CD4-positive, alpha-beta T cell (primary cell): ENCODE measurements at regions of chr12 and their contacts with region 1.

Region 1: DNA sequence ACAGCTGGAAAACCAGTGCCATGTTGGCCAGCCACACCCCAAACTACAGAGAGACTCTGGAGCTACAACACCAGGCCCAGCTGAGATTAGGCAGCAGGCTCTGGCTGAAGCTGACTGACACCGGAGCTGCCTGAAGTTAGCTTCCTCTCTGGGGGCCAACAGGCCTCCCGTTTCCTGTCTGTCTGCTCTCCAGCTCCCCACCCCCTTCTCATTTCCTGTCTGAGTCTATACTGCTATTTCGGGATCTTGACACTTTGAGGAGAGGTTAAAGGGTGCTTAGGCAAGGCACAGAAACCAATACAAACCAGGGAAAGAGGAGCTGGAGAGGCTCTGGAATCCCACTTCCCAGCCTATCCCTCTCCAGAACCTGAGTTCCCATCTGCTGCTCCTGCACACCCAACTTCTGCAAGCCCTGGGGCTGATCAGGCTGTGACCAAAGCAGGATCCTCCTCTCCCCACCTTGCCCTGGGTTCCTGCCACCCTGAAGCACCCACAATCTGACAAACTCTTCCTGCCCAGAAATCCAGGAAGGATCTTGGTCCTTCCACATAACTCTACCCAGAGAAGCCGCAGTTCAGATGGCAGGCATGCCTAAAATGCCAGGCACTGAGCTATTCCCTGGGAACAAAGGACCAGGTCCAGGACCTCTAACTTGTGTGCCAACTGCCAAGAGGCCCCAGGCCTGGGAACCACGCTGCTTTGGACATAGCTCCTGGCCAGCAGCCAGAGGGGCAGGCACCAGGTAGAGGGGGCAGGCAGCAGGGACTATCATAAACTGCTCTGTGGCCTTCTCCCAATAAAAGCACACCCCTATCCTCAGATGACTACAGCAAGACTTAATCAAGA is 39.9 kb downstream of the PRPF40B start:
- DNase-seq: peak; percentile 53 to 91 (median 74)
- ATAC-seq: peak; percentile 97
- H3K4me3 ChIP-seq: peak overlapping the region; percentile 10
- H3K4me3 Mint-ChIP-seq: peak overlapping the region; percentile 90
- H3K27ac ChIP-seq: peak overlapping the region; percentile 88 to 97
- H3K27ac Mint-ChIP-seq: peak overlapping the region; percentile 97
- H3K4me1 ChIP-seq: peaks cover 65% of the 10 kb centered on the region
- H3K4me1 Mint-ChIP-seq: peaks cover 83% of the 10 kb centered on the region
- H3K27me3 ChIP-seq: no peaks in the 10 kb centered on the region
- H3K27me3 Mint-ChIP-seq: no peaks in the 10 kb centered on the region
- CTCF ChIP-seq: no peak

Region 2: GRCh38 chr12:49673446-49674317 is 10.5 kb after region 1 on chr12:
- CTCF ChIA-PET with region 1: interaction called, 11 read pairs
- POLR2A ChIA-PET with region 1: interaction called, 105 read pairs
- intact Hi-C with region 1: loop called in 1 of 2 experiments (anchors 1 kb)
- DNase-seq: peak in 6 of 14 experiments; percentile 21 to 55 (median 32)
- ATAC-seq: peak; percentile 7
- H3K4me3 ChIP-seq: no peak overlapping the region
- H3K4me3 Mint-ChIP-seq: peak overlapping the region; percentile 72
- H3K27ac ChIP-seq: peak overlapping the region; percentile 89 to 93
- H3K27ac Mint-ChIP-seq: peak overlapping the region; percentile 97
- H3K4me1 ChIP-seq: peaks cover 71% of the 10 kb centered on the region
- H3K4me1 Mint-ChIP-seq: peaks cover 91% of the 10 kb centered on the region
- H3K27me3 ChIP-seq: no peaks in the 10 kb centered on the region
- H3K27me3 Mint-ChIP-seq: no peaks in the 10 kb centered on the region
- CTCF ChIP-seq: no peak

Region 3: DNA sequence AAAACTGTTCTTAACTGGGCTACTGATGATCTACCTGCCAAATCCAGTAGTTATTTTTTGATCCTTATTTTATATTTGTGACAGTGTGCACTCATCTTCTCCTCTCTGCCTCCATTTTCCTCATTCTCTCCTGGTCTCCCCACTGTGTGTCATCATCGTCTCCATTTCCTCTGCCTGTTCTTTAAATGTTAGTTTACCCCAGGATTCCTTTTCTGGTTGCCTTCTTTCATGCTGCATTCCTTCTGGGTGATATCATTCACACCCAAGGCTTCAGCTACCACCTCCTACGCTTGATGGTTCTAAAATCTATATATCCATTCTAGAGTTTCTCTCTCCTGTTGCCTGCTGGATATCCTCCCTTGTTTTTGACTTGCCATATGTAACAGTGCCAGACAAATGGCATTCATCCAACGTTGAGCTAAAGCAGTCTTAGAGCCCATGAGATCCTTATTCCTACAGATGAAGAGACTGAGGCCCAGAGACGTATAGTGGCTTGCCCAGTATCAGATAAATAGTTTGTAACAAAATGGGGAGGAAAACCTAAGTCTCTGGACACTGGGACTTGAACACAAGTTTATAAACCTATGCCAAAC is 951.0 kb after region 1 on chr12:
- CTCF ChIA-PET with region 1: no interaction called
- POLR2A ChIA-PET with region 1: no interaction called
- intact Hi-C with region 1: no loop called
- DNase-seq: no peak
- ATAC-seq: no peak
- H3K4me3 ChIP-seq: no peak overlapping the region
- H3K4me3 Mint-ChIP-seq: no peak overlapping the region
- H3K27ac ChIP-seq: no peak overlapping the region
- H3K27ac Mint-ChIP-seq: no peak overlapping the region
- H3K4me1 ChIP-seq: peaks cover under 1% of the 10 kb centered on the region
- H3K4me1 Mint-ChIP-seq: peaks cover 40% of the 10 kb centered on the region
- H3K27me3 ChIP-seq: no peaks in the 10 kb centered on the region
- H3K27me3 Mint-ChIP-seq: no peaks in the 10 kb centered on the region
- CTCF ChIP-seq: no peak